Heart left ventricle (tissue), 16 donors: ENCODE measurements at regions of chr18 and their contacts with region 1.

Region 1: GRCh38 chr18:70279470-70279869 is 9.4 kb upstream of the SOCS6 start:
- DNase-seq: no peak
- ATAC-seq: no peak
- H3K4me3 ChIP-seq: no peak overlapping the region
- H3K27ac ChIP-seq: no peak overlapping the region
- H3K4me1 ChIP-seq: peaks cover 0 to 4% (median 0%) of the 10 kb centered on the region in 12 donors
- H3K27me3 ChIP-seq: no peaks in the 10 kb centered on the region
- CTCF ChIP-seq: no peak
- POLR2A ChIP-seq: no peak

Region 2: GRCh38 chr18:70221156-70221914 is 58.1 kb before region 1 on chr18:
- intact Hi-C with region 1: loop called in 1 of 10 experiments (anchors 5 kb)
- DNase-seq: peak in 1 of 5 donors; percentile 48
- ATAC-seq: peak; percentile 57 to 76 (median 64)
- H3K4me3 ChIP-seq: peak overlapping the region in 2 of 12 donors; percentile 5 to 19
- H3K27ac ChIP-seq: peak overlapping the region in 1 of 12 donors; percentile 15
- H3K4me1 ChIP-seq: peaks cover 0 to 10% (median 0%) of the 10 kb centered on the region in 12 donors
- H3K27me3 ChIP-seq: no peaks in the 10 kb centered on the region
- CTCF ChIP-seq: no peak
- POLR2A ChIP-seq: no peak

Region 3: DNA sequence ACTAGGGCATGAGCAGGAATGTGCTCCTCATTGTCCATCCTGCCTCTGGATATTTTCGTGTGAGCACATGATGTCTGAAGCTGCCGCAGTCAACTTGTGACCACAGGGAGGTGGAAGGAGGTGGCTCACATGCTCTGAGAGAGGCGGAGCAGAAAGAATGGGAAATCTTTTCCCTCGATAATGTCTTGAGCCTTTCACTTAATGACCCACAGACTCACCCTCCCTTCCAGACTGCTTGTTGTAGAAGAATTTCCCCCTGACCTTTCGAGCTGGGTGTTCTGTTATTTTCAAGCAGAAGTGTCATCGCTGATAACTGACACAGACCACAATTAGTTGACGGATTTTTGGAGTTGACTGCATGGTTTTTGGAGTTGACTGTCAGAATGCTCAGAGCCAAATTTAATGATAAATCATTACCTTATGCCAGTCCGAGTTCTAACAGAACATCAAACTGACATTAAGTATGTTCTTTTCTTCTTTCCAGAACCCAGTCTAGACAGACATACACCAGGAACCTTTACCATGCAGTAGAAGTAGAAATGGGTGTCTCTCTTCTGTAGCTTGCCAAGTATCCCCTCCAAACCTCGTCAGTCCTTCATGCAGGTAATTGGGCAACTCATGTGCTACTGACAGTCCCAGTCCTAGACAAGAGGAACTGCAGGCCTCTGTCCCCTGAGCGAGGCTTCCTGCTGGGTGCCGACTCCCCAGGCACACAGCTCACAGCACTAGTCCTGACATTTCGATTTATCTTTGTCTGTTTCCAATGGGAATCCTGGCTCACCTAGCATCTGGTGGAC is 44.6 kb before region 1 on chr18:
- intact Hi-C with region 1: loop called in 1 of 10 experiments (anchors 5 kb)
- DNase-seq: peak in 2 of 5 donors; percentile 18 to 59
- ATAC-seq: peak; percentile 51 to 93 (median 85)
- H3K4me3 ChIP-seq: no peak overlapping the region
- H3K27ac ChIP-seq: peak overlapping the region in 8 of 12 donors; percentile 3 to 65 (median 40)
- H3K4me1 ChIP-seq: peaks cover 0 to 16% (median 4%) of the 10 kb centered on the region in 12 donors
- H3K27me3 ChIP-seq: no peaks in the 10 kb centered on the region
- CTCF ChIP-seq: no peak
- POLR2A ChIP-seq: no peak

Region 4: GRCh38 chr18:70261141-70261788 is 18.2 kb before region 1 on chr18:
- intact Hi-C with region 1: no loop called
- DNase-seq: no peak
- ATAC-seq: no peak
- H3K4me3 ChIP-seq: no peak overlapping the region
- H3K27ac ChIP-seq: no peak overlapping the region
- H3K4me1 ChIP-seq: no peaks in the 10 kb centered on the region
- H3K27me3 ChIP-seq: no peaks in the 10 kb centered on the region
- CTCF ChIP-seq: no peak
- POLR2A ChIP-seq: no peak